Activated T-helper 2 cell treated with anti-CD3 and anti-CD28 coated beads, Interferon-gamma antibody, Interleukin-2, Interleukin-4, amounts not matched to agents 10 μg/mL and 5 μg/mL and 100 μg/mL, durations not matched to agents 14 hours and 24 hours and 36 hours (primary cell): ENCODE measurements at regions of chr20 and their contacts with region 1.

Region 1: DNA sequence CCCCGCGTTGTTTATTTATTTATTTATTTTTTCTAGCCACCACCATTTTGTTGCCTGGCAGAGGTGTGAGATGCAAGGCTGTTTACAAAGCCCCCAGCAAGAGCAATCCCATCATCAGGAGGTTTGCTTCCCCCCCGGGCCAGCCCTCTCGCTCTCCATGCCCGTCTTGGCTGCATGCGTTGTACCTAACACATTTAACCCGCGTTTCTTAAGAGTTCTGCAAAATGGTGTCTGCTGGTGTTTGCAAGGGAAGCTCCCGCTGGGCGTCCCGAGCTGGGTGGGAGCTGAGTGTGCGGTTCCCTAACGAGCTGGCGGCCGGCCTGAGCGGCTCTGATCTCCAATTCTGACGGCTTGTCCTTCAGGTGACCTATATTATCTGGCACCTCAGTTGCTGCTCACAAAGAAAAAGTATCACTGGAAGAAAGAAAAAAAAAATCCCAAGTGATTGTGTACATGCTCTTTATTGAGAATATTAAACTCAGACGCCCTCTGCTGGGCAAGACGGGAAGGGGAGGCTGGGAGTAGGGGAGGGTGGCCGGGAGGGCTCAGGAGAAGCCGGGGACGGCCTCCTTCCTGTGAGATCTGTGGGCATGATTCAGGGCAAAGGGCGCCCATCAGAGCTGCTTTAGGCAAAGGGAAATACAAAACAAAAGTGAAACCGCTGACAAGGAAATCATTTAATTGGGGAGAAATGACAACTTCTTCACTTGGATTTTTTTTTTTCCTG is 154.8 kb downstream of the BCAS1 start:
- DNase-seq: peak; percentile 89
- H3K4me3 Mint-ChIP-seq: peak overlapping the region; percentile 89
- H3K27ac Mint-ChIP-seq: peak overlapping the region; percentile 92
- H3K4me1 Mint-ChIP-seq: peaks cover 51% of the 10 kb centered on the region
- H3K27me3 Mint-ChIP-seq: no peaks in the 10 kb centered on the region

Region 2: DNA sequence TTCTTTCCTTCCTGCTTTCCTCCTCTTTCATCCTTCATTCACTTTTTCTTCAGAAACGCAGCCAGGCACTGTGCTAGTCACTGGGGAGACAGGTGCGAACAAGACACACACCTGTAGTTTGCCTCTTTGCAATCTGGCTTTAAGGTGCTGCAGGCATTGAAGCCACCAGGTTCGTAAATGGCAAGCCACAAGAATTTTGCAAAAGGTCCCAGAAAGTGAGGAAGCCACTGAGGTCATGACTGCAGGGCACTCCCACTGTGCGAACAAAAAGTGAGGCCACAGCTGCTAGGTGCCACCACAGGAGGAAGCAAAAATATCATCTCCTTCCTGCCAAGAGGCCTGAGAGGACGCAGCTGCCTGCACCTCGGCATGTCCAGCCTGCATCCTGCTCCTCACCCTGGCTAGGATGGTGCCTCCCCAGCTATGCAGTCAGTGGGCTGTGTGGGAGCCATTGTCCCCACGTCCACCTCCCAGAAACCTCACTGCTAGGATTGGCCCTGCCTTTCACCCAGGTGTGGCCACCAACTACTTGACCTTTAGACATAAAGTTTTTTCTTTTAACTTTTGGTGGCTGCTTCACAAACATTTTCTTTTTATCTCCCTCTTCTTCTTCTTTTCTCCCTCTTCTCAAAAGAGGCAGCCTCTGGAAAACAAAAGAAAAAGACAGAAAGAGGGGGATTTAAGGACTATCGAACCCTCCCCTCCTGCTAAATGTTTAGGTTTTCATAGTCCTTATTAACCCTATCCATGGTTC is 76.0 kb before region 1 on chr20:
- intact Hi-C with region 1: loop called (anchors 2 kb)
- DNase-seq: peak; percentile 64
- H3K4me3 Mint-ChIP-seq: peak overlapping the region; percentile 73
- H3K27ac Mint-ChIP-seq: peak overlapping the region; percentile 84
- H3K4me1 Mint-ChIP-seq: peaks cover 62% of the 10 kb centered on the region
- H3K27me3 Mint-ChIP-seq: no peaks in the 10 kb centered on the region

Region 3: GRCh38 chr20:53857723-53858236 is 57.8 kb before region 1 on chr20:
- intact Hi-C with region 1: no loop called
- DNase-seq: no peak
- H3K4me3 Mint-ChIP-seq: no peak overlapping the region
- H3K27ac Mint-ChIP-seq: no peak overlapping the region
- H3K4me1 Mint-ChIP-seq: peaks cover 27% of the 10 kb centered on the region
- H3K27me3 Mint-ChIP-seq: no peaks in the 10 kb centered on the region

Region 4: DNA sequence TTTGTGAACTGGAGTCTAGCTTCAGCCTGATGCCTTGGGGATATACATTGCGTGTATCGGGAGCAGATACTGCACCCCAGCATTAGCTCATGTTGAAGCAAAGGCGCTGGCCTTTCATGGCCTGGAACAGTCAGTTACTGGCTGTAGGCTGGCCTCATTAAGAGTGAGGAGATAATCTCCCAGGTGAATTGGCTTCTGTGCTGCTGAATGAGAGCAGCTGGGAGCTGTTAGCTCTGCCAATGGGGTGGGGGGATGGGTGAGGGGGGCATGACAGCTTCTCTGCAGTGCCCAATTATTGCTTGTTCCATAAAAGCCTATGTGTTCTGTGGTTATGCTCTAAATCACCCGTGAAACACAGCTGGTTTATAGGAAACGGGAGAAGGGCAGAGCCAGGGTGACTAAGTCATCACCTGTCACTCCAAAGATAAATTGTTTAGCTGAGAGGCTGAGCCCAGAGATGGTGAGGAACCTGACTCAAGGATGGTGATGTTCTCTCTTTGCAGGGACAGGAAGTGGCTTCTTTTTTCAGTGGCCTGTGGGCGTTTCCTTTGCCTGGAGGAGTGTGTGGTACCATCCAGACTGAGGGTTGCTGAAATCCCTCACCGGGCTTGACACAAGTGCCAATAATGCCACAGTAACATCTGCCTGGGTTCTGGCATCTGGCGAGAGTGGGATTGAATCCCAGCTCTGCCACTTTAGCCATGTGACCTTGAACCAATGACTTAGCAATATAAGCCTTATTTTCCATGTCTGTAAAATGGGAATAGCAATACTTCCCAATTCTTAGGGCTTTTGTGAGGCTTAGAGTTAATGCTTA is 16.1 kb before region 1 on chr20:
- intact Hi-C with region 1: loop called (anchors 1 kb)
- DNase-seq: peak; percentile 78
- H3K4me3 Mint-ChIP-seq: no peak overlapping the region
- H3K27ac Mint-ChIP-seq: peak overlapping the region; percentile 90
- H3K4me1 Mint-ChIP-seq: peaks cover 56% of the 10 kb centered on the region
- H3K27me3 Mint-ChIP-seq: no peaks in the 10 kb centered on the region

Region 5: GRCh38 chr20:53934421-53935343 is 19.1 kb after region 1 on chr20:
- intact Hi-C with region 1: loop called (anchors 2 kb)
- DNase-seq: no peak
- H3K4me3 Mint-ChIP-seq: peak overlapping the region; percentile 24
- H3K27ac Mint-ChIP-seq: peak overlapping the region; percentile 83
- H3K4me1 Mint-ChIP-seq: peaks cover 51% of the 10 kb centered on the region
- H3K27me3 Mint-ChIP-seq: no peaks in the 10 kb centered on the region

Region 6: GRCh38 chr20:53949319-53949889 is 33.8 kb after region 1 on chr20:
- intact Hi-C with region 1: no loop called
- DNase-seq: peak; percentile 79
- H3K4me3 Mint-ChIP-seq: peak overlapping the region; percentile 49
- H3K27ac Mint-ChIP-seq: peak overlapping the region; percentile 90
- H3K4me1 Mint-ChIP-seq: peaks cover 31% of the 10 kb centered on the region
- H3K27me3 Mint-ChIP-seq: no peaks in the 10 kb centered on the region